Gastrocnemius medialis (tissue), 4 donors: ENCODE measurements at regions of chr18 and their contacts with region 1.

Region 1: GRCh38 chr18:25467226-25467987 is 115.4 kb upstream of the ZNF521 start:
- DNase-seq: peak; percentile 88 to 95
- ATAC-seq: peak; percentile 98 to 99
- H3K4me3 ChIP-seq: peak overlapping the region in 3 of 4 donors; percentile 3 to 25 (median 5)
- H3K27ac ChIP-seq: peak overlapping the region; percentile 73 to 84 (median 82)
- H3K4me1 ChIP-seq: peaks cover 31 to 36% of the 10 kb centered on the region in 2 donors
- H3K27me3 ChIP-seq: no peaks in the 10 kb centered on the region
- CTCF ChIP-seq: no peak
- POLR2A ChIP-seq: no peak

Region 2: DNA sequence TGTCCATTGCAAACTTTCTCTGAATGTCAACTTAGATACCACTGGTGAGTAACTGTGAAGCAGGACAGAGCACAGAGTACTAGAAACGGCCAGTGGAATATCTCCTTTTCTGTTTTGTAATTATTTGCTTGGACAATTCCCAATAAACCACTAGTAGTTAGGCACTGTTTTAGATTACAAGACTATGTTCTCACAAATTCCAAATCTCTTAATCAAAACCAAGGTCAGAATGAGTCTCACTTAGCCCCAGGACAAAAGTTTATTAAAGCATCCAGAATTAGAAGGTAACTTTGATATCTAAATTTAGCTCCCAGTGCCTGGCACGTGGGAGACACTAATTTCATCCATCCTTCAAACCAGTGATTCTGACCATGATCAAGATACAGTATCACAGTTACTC is 204.5 kb before region 1 on chr18:
- in situ Hi-C with region 1: no loop called
- intact Hi-C with region 1: no loop called
- DNase-seq: no peak
- ATAC-seq: no peak
- H3K4me3 ChIP-seq: no peak overlapping the region
- H3K27ac ChIP-seq: no peak overlapping the region
- H3K4me1 ChIP-seq: peaks cover 0 to 12% of the 10 kb centered on the region in 2 donors
- H3K27me3 ChIP-seq: no peaks in the 10 kb centered on the region
- CTCF ChIP-seq: no peak
- POLR2A ChIP-seq: no peak

Region 3: DNA sequence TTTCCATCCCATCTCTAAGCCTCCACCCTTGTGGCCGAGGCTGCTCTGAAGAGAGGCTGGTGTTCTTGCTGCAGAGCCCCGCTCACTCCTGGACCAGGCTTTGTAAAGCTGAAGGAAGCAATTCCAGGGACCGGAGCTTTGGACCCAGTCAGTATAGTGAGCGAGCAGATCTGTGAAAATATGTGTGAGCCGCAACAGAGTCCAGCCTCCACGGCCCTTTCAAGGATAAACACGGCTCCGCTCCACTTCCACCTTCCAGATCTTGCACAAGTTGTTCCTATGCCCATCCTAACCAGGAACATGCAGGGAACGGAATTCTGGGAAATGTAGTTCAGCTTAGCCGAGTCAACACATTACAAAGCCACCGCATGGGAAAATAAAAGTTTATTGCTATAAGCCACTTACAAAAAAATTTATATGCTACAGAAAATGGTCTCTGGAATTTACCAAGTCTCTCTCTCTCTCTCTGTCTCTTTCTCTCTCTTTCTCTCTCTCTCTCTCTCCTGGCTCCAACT is 36.2 kb after region 1 on chr18:
- in situ Hi-C with region 1: no loop called
- intact Hi-C with region 1: loop called (anchors 2 kb)
- DNase-seq: peak; percentile 41 to 53
- ATAC-seq: peak; percentile 95 to 97
- H3K4me3 ChIP-seq: peak overlapping the region; percentile 32 to 77 (median 49)
- H3K27ac ChIP-seq: peak overlapping the region in 3 of 4 donors; percentile 36 to 46 (median 39)
- H3K4me1 ChIP-seq: peaks cover 0 to 4% of the 10 kb centered on the region in 2 donors
- H3K27me3 ChIP-seq: no peaks in the 10 kb centered on the region
- CTCF ChIP-seq: no peak
- POLR2A ChIP-seq: no peak

Region 4: DNA sequence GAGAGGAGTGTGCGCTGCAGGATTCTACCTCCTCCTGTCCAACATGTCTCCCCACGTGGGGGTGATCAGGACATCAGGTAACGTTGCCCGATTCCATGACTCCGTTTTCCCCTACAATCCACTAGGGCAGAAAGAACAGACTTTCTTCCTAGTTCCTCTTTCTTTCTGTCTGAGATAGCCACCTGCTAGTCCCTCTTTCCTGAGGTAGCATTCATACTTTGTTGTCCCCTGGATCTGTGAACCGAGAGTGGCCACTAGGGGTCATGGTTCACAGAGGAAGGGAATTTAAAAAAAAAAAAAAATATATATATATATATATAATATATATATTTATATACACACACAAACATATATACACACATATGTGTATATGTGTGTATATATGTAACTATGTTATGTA is 94.5 kb after region 1 on chr18:
- in situ Hi-C with region 1: no loop called
- intact Hi-C with region 1: loop called (anchors 2 kb)
- DNase-seq: no peak
- ATAC-seq: no peak
- H3K4me3 ChIP-seq: no peak overlapping the region
- H3K27ac ChIP-seq: no peak overlapping the region
- H3K4me1 ChIP-seq: peaks cover 12 to 14% of the 10 kb centered on the region in 2 donors
- H3K27me3 ChIP-seq: no peaks in the 10 kb centered on the region
- CTCF ChIP-seq: peak in 2 of 5 experiments; percentile 27 to 38
- POLR2A ChIP-seq: no peak